ENCODE measurements at regions of chr7 and their contacts with region 1.

Region 1: GRCh38 chr7:135170274-135170997 is at the start of gene CYREN:
- DNase-seq: peak; percentile 85 to 98 (median 95)

Region 2: DNA sequence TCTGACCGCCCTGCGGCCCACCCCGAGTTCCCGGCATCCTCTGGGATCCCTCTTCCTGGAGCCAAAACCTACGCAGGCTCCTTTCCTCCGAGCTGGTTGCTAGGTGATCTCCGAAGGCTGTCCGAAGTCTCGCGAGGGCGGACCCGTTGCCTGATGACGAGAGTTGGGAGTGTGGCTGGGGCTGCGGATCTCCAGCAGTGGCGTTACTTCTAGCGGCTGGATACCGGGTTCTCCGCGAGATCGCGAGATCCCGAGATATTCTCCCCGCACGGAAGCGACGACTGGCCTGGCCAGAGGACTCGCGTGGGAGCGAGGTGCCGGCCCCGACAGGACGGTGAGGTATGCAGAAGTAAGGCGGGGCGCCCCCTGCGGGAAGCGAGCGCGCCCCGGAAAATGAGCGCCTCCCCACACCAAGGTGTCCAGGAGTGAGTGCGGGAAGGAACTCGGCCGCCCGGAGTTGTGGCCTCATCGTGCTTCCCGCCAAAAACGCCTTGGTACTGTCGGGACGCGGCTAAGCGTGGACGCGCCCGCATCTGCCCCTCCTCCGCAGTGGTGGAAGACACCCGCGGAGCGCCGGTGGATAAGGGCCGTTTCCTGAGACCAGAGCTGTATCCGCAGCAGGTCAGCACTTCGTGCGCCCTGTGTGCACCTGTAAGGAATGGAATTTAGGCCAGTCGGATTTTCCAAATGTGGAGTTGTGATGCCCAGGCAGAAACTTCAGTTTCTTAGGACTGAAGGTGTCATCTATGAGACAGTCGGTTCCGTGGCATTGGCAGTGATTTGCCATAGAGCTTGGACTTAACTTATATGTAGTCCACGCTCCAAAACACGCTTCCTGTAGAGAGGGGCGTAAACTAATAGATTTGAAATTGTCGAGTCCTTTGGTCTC is 183.8 kb before region 1 on chr7 and contains the start of gene AGBL3:
- intact Hi-C with region 1: loop called (anchors 2 kb)
- DNase-seq: peak; percentile 86 to 97 (median 93)

Measured in head of caudate nucleus (tissue), 42 donors.